Natural killer cell (primary cell): ENCODE measurements at regions of chr2 and their contacts with region 1.

Region 1: GRCh38 chr2:100242891-100243619 is 79.2 kb downstream of the LONRF2 start:
- DNase-seq: peak in 1 of 2 donors; percentile 64
- ATAC-seq: peak in 1 of 3 donors; percentile 48
- H3K4me3 ChIP-seq: no peak overlapping the region
- H3K4me3 Mint-ChIP-seq: no peak overlapping the region
- H3K27ac ChIP-seq: no peak overlapping the region
- H3K27ac Mint-ChIP-seq: no peak overlapping the region
- H3K4me1 ChIP-seq: peaks cover 20% of the 10 kb centered on the region
- H3K4me1 Mint-ChIP-seq: no peaks in the 10 kb centered on the region
- H3K27me3 ChIP-seq: no peaks in the 10 kb centered on the region
- H3K27me3 Mint-ChIP-seq: peaks cover 0 to 14% of the 10 kb centered on the region in 2 donors
- CTCF ChIP-seq: peak; percentile 14

Region 2: DNA sequence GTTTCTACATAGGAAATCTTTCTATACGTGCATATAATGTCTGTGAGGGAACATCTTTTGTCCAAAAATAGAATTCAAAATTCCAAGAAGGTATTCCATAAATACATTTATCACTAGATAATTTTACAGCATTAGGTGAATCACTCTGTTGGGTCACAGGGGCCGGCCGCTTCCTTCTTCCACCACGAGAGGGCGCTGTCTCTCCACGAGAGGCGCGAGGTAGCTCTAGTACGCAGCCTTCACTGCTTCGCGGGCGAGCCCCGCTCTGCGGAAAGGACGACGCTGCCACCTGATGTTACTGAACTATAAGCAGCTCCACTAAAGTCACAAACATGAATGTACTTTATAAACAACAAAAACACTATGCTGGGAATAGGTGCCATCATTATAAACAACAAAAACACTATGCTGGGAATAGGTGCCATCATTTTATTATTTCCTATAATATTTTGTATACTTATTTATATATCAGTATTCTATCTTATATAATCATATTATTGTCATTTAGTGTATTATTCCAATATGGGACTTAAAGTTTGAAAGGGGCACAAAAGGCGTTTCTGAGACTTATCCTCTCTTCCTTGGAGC is 683.9 kb before region 1 on chr2:
- intact Hi-C with region 1: loop called (anchors 1 kb)
- DNase-seq: peak; percentile 74 to 86
- ATAC-seq: peak; percentile 96 to 100 (median 97)
- H3K4me3 ChIP-seq: no peak overlapping the region
- H3K4me3 Mint-ChIP-seq: no peak overlapping the region
- H3K27ac ChIP-seq: no peak overlapping the region
- H3K27ac Mint-ChIP-seq: no peak overlapping the region
- H3K4me1 ChIP-seq: no peaks in the 10 kb centered on the region
- H3K4me1 Mint-ChIP-seq: peaks cover 4 to 6% of the 10 kb centered on the region in 2 donors
- H3K27me3 ChIP-seq: no peaks in the 10 kb centered on the region
- H3K27me3 Mint-ChIP-seq: peaks cover 2 to 6% of the 10 kb centered on the region in 2 donors
- CTCF ChIP-seq: peak; percentile 98